Motor neuron (in vitro differentiated cells): ENCODE measurements at regions of chr10 and their contacts with region 1.

Region 1: GRCh38 chr10:72331601-72332422 is 22.9 kb downstream of the DNAJB12 start:
- ATAC-seq: peak; percentile 31 to 94 (median 62)
- H3K4me3 ChIP-seq: no peak overlapping the region
- H3K27ac ChIP-seq: peak overlapping the region; percentile 74 to 87
- H3K4me1 ChIP-seq: peaks cover 76 to 85% of the 10 kb centered on the region in 2 donors

Region 2: DNA sequence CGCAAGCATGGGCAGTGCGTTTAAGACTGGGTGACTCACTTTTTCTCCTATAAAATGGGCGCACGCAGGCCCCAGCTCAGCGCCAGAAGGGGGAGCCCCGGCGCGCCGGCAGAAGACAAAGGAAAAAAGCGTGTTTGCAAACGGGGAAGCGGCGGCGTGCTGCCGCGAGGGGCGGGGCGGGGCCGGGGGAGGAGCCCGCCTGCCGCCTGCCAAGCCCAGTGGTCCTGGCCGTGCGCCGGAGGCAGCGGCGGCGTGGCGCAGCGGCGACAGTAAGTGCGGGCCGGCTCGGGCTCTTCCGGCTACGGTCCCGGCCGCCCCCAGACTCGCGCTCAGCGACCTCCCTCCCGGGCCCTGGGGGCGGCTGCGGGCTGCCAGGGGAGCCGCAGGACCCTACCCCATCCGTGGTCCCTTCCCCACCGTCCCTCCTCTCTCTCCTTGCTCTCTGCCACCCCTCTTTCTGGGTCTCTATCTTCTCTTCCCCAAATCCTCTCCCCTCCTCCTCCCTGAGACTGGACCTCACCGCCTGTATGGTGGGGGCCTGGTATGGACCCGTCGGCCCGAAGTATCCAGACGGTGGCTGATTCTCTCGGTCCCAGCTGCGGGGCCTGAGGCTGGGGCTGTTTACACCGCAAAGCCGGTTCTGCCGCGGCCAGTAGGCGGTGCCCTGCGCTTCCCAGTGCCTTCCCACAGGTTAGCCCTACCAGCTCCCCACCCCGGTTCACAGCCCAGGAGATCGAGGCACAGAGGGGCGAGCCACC is 1012.6 kb before region 1 on chr10 and contains the start of gene SLC29A3:
- in situ Hi-C with region 1: loop called in 1 of 9 experiments (anchors 25 kb)
- ATAC-seq: peak; percentile 88 to 95 (median 92)
- H3K4me3 ChIP-seq: peak within 1 kb of the TSS; percentile 47 to 68 (median 53)
- H3K27ac ChIP-seq: peak within 1 kb of the TSS; percentile 69 to 73
- H3K4me1 ChIP-seq: peaks cover 17% of the 10 kb centered on the region in 2 donors
- total RNA-seq, gene SLC29A3: 2.3 to 7.6 (median 4.1) TPM

Region 3: GRCh38 chr10:71888623-71889387 is 443.0 kb before region 1 on chr10:
- in situ Hi-C with region 1: loop called in 1 of 9 experiments (anchors 25 kb)
- ATAC-seq: peak; percentile 88 to 96 (median 96)
- H3K4me3 ChIP-seq: peak overlapping the region; percentile 33 to 53 (median 43)
- H3K27ac ChIP-seq: peak overlapping the region; percentile 38 to 59
- H3K4me1 ChIP-seq: peaks cover 8 to 9% of the 10 kb centered on the region in 2 donors

Region 4: DNA sequence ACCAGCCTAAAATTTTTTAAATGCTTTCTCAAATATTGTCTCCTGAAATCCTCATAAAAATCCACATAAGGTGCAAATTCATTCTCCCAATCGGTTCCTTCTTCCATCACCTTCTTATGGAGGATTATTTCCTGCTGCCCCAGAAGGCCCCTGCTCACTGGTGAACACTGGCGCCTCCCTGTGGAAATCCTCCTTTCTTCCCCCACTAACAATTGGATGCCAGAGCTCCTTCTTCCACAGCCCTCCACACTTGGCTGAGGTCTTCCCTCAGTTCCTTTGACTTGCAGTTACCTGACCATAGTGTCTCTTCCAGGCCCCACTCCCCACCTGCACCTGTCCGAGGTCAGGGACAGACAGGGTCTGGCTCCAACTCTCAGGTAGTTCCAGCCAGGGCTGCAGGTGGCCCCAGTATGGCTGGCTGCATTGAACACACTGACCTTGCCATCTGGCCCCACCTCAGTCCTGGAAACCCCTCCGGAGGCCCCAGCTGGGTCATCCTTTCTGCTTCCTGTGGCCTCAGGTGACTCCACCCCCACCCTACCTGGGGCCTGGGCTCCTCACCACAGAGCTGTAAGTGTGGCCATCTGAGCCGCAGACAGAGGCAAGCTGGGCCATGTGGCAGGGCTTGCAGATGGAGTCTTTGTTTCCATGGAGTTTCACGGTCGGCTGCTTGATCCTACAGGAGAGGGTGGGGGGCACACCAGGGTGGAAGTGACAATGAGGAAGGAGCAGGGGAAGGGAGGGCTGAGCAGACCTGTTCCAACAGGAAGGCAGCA is 261.9 kb before region 1 on chr10:
- in situ Hi-C with region 1: loop called in 1 of 9 experiments (anchors 25 kb)
- ATAC-seq: peak in 5 of 8 experiments; percentile 81 to 94 (median 90)
- H3K4me3 ChIP-seq: no peak overlapping the region
- H3K27ac ChIP-seq: peak overlapping the region in 1 of 2 donors; percentile 28
- H3K4me1 ChIP-seq: peaks cover 21 to 24% of the 10 kb centered on the region in 2 donors

Region 5: GRCh38 chr10:72248468-72249151 is 83.2 kb before region 1 on chr10:
- in situ Hi-C with region 1: loop called in 1 of 9 experiments (anchors 25 kb)
- ATAC-seq: peak; percentile 19 to 79 (median 72)
- H3K4me3 ChIP-seq: no peak overlapping the region
- H3K27ac ChIP-seq: peak overlapping the region; percentile 4 to 29
- H3K4me1 ChIP-seq: peaks cover 12 to 30% of the 10 kb centered on the region in 2 donors

Region 6: GRCh38 chr10:72273410-72274212 is 58.2 kb before region 1 on chr10 and contains the start of gene DDIT4:
- in situ Hi-C with region 1: loop called in 1 of 9 experiments (anchors 10 kb)
- ATAC-seq: peak; percentile 73 to 86 (median 80)
- H3K4me3 ChIP-seq: peak within 1 kb of the TSS; percentile 70 to 89 (median 84)
- H3K27ac ChIP-seq: peak within 1 kb of the TSS; percentile 96 to 98
- H3K4me1 ChIP-seq: peaks cover 26 to 39% of the 10 kb centered on the region in 2 donors
- total RNA-seq, gene DDIT4: 58.6 to 340 (median 216) TPM

Region 7: GRCh38 chr10:72719718-72720592 is 388.1 kb after region 1 on chr10:
- in situ Hi-C with region 1: no loop called
- ATAC-seq: peak in 1 of 8 experiments; percentile 28
- H3K4me3 ChIP-seq: no peak overlapping the region
- H3K27ac ChIP-seq: no peak overlapping the region
- H3K4me1 ChIP-seq: no peaks in the 10 kb centered on the region